HEK293 (cell line): ENCODE measurements at regions of chr1 and their contacts with region 1.

Region 1: DNA sequence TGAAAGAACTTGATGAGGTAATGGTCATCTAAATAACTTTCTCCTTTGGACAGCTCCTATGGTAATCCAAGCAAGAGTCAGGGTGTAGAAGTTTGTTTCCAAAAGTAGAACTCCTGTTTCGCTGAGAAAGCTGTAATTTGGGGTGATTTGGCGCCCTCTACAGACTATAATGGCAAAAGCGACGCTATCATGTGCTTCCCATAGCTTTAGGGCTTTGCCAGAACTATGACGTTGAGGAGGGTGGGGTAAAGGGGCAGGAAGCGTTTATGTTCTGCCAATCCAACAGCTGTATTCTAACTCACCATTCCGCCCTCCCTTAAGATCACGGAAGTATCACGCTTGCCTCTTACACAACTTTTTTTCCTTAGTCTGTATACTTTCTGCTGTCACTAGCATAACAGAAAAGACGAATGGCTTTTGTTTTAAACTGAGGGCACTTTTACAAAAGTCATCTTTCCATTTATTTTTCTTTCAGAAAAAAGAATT is at the start of gene FMO4:
- H3K4me3 ChIP-seq: peak within 1 kb of the TSS; percentile 23
- H3K27ac ChIP-seq: no peak within 1 kb of the TSS
- H3K4me1 ChIP-seq: no peaks in the 10 kb centered on the region
- CTCF ChIP-seq: peak; percentile 86

Region 2: DNA sequence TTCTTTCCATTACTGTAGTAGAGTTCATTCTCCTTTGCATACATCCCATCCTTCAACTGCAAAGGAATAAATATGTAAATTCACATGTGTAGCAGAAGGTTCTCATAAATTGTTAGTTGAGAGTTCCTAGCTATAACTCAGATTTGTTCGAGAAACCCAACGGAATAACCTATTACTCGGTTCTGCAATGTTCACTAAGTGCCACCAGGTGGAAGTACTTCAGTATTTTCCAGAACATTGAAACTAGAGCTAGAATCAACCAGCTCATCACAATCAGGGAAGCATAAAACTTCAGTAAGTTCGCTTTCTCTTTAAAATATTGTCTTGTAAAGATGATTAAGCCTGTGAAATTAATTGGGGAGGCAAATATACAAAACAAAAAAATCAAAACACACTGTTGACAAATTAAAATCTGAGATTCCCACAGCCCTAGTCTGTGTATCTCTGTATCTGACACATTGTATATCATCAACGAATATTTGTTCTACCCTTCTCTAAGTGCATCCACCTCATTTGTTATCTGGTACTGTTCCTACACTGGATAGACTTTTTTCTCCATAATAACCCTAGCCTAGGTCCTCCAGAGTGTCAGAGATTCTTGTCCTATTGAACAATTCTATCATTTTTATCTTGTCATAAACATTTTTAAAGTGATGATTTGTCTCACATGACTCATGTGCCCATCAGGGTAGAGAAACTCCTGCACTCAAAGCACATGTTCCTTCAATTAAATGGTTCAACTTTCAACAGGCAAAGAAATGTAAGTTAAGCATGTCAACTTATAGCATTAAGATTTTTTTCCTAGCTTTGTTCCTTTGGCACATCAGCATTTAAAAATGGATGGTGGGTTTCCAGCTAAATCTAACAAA is 346.6 kb before region 1 on chr1:
- CTCF ChIA-PET with region 1: interaction called, 37 read pairs
- POLR2A ChIA-PET with region 1: no interaction called
- H3K4me3 ChIP-seq: no peak overlapping the region
- H3K27ac ChIP-seq: no peak overlapping the region
- H3K4me1 ChIP-seq: no peaks in the 10 kb centered on the region
- CTCF ChIP-seq: no peak

Region 3: GRCh38 chr1:171226747-171227370 is 87.0 kb before region 1 on chr1:
- CTCF ChIA-PET with region 1: interaction called, 19 read pairs
- POLR2A ChIA-PET with region 1: no interaction called
- H3K4me3 ChIP-seq: no peak overlapping the region
- H3K27ac ChIP-seq: no peak overlapping the region
- H3K4me1 ChIP-seq: no peaks in the 10 kb centered on the region
- CTCF ChIP-seq: peak; percentile 73

Region 4: DNA sequence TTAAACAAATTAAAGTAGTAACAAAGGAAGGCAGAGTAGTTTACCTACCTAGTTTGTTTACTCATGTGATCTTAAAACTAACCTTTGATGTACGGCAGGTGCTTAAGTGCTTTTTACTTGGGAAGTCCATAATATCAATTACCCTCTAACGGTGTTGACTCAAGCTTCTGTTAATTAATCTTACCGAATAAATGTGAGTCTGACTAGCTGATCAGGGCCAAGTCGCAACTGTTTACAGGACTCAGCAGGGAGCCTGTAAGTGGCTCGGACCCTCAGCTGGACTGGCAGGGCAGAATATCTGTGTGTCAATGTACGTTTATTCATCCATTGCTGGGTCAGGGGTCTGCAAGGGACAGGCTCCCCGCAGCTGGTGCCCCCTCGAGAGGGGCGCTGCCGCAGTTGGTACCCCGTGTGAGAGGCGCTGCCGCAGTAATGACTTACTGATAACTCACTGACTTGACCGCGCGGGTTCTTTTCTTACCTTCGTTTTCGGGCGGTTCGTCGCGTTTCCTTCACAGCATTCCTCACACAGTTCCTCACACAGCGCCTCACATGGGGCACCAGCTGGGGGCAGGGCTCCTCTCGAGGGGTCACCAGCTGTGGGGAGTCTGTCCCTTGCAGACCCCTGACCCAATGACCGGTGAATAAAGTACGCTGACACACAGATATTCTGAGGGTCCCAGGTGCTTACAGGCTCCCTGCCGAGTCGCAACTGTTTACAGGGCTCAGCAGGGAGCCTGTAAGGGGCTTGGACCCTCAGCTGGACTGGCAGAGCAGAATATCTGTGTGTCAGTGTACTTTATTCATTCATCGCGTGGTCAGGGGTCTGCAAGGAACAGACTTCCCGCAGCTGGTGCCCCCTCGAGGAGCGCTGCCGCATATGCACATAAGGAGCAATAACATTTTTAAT is 62.6 kb before region 1 on chr1:
- CTCF ChIA-PET with region 1: interaction called, 41 read pairs
- POLR2A ChIA-PET with region 1: no interaction called
- H3K4me3 ChIP-seq: peak overlapping the region; percentile 57
- H3K27ac ChIP-seq: peak overlapping the region; percentile 44; the same call in 1 of the 2 replicates
- H3K4me1 ChIP-seq: no peaks in the 10 kb centered on the region
- CTCF ChIP-seq: 0 out of 2 replicates have a peak, but pooled peaks have one; percentile 19

Region 5: DNA sequence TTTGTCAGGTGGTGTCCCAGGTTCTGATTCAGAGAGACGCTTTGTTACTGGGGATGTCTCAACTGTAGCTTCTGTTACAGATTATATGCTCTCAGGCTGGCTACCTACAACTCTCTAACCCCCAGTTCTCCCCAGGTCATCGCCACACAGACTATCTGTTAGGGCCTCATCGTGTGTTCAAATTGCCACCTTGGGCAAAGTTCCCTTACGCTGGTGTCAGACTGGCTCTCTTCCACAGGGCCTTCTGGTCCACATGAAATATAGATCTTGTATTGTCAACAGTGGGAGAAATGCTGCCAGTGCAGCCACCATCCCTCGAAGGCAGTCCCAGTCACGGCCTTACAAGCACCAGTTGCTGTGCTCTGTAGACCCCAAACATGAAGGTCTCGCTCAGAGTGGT is 15.4 kb after region 1 on chr1:
- CTCF ChIA-PET with region 1: interaction called, 10 read pairs
- POLR2A ChIA-PET with region 1: interaction called, 4 read pairs
- H3K4me3 ChIP-seq: no peak overlapping the region
- H3K27ac ChIP-seq: no peak overlapping the region
- H3K4me1 ChIP-seq: no peaks in the 10 kb centered on the region
- CTCF ChIP-seq: no peak